Motor neuron (in vitro differentiated cells): ENCODE measurements at regions of chr5 and their contacts with region 1.

Region 1: DNA sequence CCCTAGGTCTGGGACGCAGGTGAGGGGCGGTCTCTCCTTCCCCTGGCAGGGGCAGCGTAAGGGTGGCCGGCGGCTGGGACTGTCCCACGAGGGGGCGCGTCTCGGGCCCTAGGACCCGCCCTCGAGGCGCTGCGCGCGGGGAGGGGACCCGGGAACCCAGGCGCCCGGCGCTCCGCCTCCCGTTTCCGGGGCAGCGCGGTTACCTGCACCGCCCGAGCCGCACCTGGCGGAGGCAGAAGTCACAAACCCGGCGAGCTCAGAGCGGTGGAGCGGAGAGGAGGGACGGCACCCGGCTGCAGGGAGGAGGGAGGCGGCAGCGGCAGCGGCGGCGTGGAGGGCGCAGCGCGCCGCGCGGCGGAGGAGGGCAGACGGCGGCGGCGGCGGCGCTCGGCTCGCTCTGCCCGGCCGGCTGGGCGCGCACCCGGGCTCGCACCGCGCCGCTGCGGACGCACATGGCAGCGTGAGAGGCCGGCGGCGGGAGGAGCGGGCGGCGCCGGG is at the start of gene WWC1:
- ATAC-seq: peak; percentile 65 to 88 (median 76)
- H3K4me3 ChIP-seq: peak within 1 kb of the TSS; percentile 57 to 96 (median 72)
- H3K27ac ChIP-seq: no peak within 1 kb of the TSS
- H3K4me1 ChIP-seq: peaks cover 20 to 26% of the 10 kb centered on the region in 2 donors
- total RNA-seq, gene WWC1: 5.6 to 74.1 (median 8.9) TPM

Region 2: GRCh38 chr5:168486136-168486879 is 194.8 kb after region 1 on chr5 and contains the start of gene RARS1:
- in situ Hi-C with region 1: loop called in 1 of 9 experiments (anchors 25 kb)
- ATAC-seq: peak; percentile 96 to 99 (median 99)
- H3K4me3 ChIP-seq: peak within 1 kb of the TSS; percentile 83 to 98 (median 92)
- H3K27ac ChIP-seq: peak within 1 kb of the TSS; percentile 86 to 96
- H3K4me1 ChIP-seq: peaks cover 0 to 4% of the 10 kb centered on the region in 2 donors
- total RNA-seq, gene RARS1: 69.1 to 244 (median 97.5) TPM

Region 3: DNA sequence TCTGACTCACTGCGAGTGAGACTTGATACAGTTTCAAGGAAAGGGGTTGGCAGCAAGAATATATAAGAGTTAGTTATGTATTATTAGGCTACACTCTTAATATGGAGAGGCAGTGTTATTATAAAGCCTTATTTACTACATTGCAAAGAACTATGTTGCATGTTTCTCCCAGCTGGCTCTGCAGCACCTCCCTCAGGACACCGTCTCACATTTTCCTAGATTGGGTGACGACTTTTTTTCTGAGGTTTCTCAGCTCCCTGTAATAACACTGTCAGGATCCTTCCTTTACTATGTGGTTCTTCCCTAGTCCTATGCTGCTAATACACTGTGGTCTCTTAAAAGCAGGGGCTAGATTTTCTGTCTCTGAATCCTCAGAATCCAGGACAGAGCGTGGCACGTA is 1535.1 kb after region 1 on chr5:
- in situ Hi-C with region 1: no loop called
- ATAC-seq: peak in 2 of 8 experiments; percentile 43 to 78
- H3K4me3 ChIP-seq: no peak overlapping the region
- H3K27ac ChIP-seq: no peak overlapping the region
- H3K4me1 ChIP-seq: peaks cover 0 to 4% of the 10 kb centered on the region in 2 donors